Activated CD8-positive, alpha-beta T cell treated with anti-CD3 and anti-CD28 coated beads for 36 hours (primary cell): ENCODE measurements at regions of chr7 and their contacts with region 1.

Region 1: DNA sequence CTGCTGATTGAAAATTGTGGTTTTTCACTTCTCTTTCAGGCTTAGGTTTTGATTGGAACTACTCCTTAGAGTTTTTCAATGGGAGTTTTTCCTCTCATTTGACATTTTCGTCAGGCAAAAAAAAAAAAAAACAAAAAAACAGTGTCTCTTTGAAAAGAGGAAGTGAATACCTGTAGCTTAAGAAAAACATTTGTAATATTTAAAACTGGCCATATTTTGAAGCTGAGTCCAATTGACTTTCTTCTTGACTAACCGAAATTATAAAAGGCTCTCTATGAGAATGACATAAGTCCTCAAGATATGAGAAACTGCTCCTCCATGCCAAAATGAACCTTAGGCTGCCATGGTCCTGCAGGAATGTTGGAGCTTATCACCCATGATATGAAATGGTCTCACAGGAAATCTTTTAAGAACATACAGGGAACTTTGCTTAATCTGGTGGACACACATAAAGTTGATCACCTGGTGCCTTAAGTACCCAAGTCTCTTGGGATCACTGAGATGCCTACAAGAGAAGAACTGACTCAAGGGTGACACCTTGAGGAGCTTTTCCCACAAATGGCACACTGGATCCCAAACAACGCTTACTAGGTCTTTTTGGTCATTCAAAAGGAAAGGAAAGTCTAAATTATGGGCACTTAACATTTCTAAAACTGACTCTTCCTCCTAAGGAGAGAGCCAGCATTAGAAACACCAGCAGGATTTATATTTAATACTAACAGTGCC is 263.4 kb downstream of the CDC14C start:
- DNase-seq: no peak
- ATAC-seq: no peak
- H3K4me3 Mint-ChIP-seq: no peak overlapping the region
- H3K27ac Mint-ChIP-seq: no peak overlapping the region
- H3K4me1 Mint-ChIP-seq: no peaks in the 10 kb centered on the region
- H3K27me3 Mint-ChIP-seq: no peaks in the 10 kb centered on the region
- CTCF ChIP-seq: no peak

Region 2: GRCh38 chr7:48992816-48993215 is 194.9 kb before region 1 on chr7:
- CTCF ChIA-PET with region 1: no interaction called
- POLR2A ChIA-PET with region 1: no interaction called
- intact Hi-C with region 1: loop called (anchors 10 kb)
- DNase-seq: no peak
- ATAC-seq: no peak
- H3K4me3 Mint-ChIP-seq: no peak overlapping the region
- H3K27ac Mint-ChIP-seq: no peak overlapping the region
- H3K4me1 Mint-ChIP-seq: no peaks in the 10 kb centered on the region
- H3K27me3 Mint-ChIP-seq: no peaks in the 10 kb centered on the region
- CTCF ChIP-seq: no peak